Vagina (tissue), 2 donors: ENCODE measurements at regions of chr19 and their contacts with region 1.

Region 1: DNA sequence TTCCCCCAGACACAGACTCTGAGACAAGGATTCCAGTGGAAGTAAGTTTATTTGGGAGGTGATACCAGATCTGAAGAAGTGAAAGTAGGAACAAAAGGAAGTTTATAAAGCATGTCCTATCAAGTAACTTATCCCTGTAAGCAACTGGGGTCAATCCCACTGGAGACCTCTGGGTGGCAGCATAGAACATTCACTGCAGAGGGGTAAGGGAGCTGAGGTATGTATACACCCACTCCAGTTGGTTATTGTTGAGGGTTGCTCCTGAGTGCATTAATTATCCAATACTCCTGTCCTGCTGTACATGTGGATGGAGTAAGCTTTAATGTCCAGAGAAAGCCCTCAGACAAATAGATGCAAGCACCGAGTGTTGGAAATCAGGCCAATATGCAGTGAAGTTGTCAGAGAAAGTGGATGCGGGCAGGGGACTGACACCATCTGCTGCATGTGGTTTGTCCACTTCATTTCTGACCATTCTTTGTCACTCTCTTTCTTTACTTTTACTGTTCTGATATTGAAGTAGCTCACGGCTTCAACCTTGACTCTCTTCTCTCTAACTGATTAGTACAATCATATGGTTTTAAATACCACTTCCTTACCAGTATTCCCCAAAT is 46.7 kb downstream of the NOTCH3 start:
- DNase-seq: no peak
- H3K4me3 ChIP-seq: no peak overlapping the region
- H3K27ac ChIP-seq: no peak overlapping the region
- H3K4me1 ChIP-seq: no peaks in the 10 kb centered on the region
- H3K27me3 ChIP-seq: no peaks in the 10 kb centered on the region
- CTCF ChIP-seq: peak in 2 of 3 experiments; percentile 21 to 38
- POLR2A ChIP-seq: no peak

Region 2: DNA sequence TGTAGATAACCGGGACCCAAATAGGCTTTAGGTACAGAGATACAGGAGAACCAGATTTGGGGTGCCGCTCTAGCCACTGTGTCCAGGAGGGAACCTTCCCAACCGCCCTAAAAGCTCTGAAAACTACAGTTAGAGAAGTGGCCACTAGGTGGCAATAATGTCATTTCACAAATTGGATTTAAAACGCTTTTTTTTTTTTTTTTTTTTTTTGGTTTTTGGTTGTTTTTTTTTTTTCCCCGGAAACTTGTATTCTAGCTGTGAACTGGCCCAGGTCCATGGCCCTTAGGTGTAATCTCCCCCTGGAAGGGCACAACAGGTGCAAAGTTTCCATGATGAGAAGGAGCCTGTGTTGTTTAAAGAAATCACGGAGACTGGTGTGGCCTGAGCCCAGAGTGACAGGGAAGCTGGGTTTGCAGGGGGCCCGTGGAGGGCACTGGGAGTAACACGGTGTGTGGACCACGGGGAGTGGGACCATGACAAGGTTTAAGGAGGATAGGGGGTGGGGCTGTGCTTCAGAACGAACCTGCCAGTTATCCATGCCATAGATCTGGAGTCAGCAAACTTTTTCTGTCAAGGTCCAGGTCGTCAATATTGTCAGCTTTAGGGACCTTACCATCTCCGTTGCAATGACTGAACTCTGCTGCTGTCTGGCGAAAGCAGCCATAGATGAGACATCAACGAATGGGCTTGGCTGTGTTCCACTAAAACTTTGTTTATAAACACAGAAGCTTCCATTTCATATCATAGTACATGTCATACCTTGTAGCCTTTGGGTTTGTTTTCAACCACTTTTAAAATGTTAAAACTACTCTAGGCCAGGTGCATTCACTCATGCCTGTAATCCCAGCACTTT is 62.0 kb before region 1 on chr19:
- intact Hi-C with region 1: loop called (anchors 5 kb)
- DNase-seq: no peak
- H3K4me3 ChIP-seq: no peak overlapping the region
- H3K27ac ChIP-seq: no peak overlapping the region
- H3K4me1 ChIP-seq: no peaks in the 10 kb centered on the region
- H3K27me3 ChIP-seq: no peaks in the 10 kb centered on the region
- CTCF ChIP-seq: peak; percentile 32 to 83 (median 55)
- POLR2A ChIP-seq: no peak

Region 3: GRCh38 chr19:15234043-15234873 is 80.2 kb after region 1 on chr19:
- intact Hi-C with region 1: no loop called
- DNase-seq: no peak
- H3K4me3 ChIP-seq: no peak overlapping the region
- H3K27ac ChIP-seq: no peak overlapping the region
- H3K4me1 ChIP-seq: peaks cover 20% of the 10 kb centered on the region
- H3K27me3 ChIP-seq: no peaks in the 10 kb centered on the region
- CTCF ChIP-seq: no peak
- POLR2A ChIP-seq: no peak

Region 4: GRCh38 chr19:15264061-15264932 is 110.2 kb after region 1 on chr19:
- intact Hi-C with region 1: no loop called
- DNase-seq: no peak
- H3K4me3 ChIP-seq: no peak overlapping the region
- H3K27ac ChIP-seq: peak overlapping the region; percentile 67
- H3K4me1 ChIP-seq: peaks cover 45% of the 10 kb centered on the region
- H3K27me3 ChIP-seq: no peaks in the 10 kb centered on the region
- CTCF ChIP-seq: peak; percentile 66 to 86 (median 69)
- POLR2A ChIP-seq: no peak